Activated CD4-positive, alpha-beta T cell treated with anti-CD3 and anti-CD28 coated beads for 36 hours (primary cell): ENCODE measurements at regions of chr6 and their contacts with region 1.

Region 1: DNA sequence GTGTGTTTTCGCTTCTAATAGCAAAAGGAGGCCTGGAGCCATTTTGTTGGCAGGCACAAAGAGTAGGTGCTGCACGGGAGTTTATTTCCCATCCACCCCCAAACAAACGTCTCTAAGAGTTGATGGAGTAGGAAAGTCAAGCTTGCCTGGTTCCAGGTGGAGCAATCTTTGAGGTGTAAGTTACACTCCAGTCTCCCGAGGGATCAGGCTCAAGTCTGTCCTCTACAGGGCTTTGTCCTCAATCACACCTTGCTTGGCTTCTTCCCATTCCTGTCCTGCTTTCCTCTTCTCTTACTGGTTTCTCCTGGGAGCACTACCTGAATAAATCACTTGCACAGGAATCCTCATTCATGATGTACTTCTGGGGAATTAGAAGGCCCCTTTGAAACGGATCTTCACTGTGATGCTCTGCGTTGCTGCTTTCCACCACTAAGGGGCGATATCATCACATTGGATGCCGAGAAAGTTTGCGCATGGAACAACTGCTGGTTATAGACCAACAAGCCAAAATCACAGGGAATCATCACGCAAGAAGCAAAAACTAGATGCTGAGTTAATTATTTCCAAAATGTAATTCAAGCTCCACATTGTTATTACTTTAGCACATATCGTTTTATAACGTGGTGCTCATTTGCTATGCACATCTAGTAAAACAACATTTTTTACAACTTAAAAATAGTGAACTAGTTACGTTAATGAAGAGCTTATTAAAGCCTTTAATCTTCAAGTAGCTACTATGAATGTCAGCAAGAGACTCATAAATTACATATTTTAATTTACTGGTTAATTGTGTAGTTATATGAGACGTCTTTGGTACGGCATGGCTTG is 156.8 kb downstream of the DNAH8 start:
- DNase-seq: peak; percentile 77
- ATAC-seq: peak; percentile 60
- H3K4me3 Mint-ChIP-seq: no peak overlapping the region
- H3K27ac Mint-ChIP-seq: no peak overlapping the region
- H3K4me1 Mint-ChIP-seq: peaks cover 33% of the 10 kb centered on the region
- H3K27me3 Mint-ChIP-seq: no peaks in the 10 kb centered on the region

Region 2: GRCh38 chr6:38933432-38933831 is 61.5 kb after region 1 on chr6:
- CTCF ChIA-PET with region 1: interaction called, 6 read pairs
- POLR2A ChIA-PET with region 1: no interaction called
- intact Hi-C with region 1: loop called (anchors 1 to 5 kb)
- DNase-seq: no peak
- ATAC-seq: peak; percentile 44
- H3K4me3 Mint-ChIP-seq: no peak overlapping the region
- H3K27ac Mint-ChIP-seq: no peak overlapping the region
- H3K4me1 Mint-ChIP-seq: no peaks in the 10 kb centered on the region
- H3K27me3 Mint-ChIP-seq: peaks cover 2% of the 10 kb centered on the region

Region 3: GRCh38 chr6:38973178-38974054 is 101.5 kb after region 1 on chr6:
- CTCF ChIA-PET with region 1: interaction called, 13 read pairs
- POLR2A ChIA-PET with region 1: no interaction called
- intact Hi-C with region 1: loop called in 1 of 2 experiments (anchors 2 kb)
- DNase-seq: peak; percentile 51
- ATAC-seq: peak; percentile 99
- H3K4me3 Mint-ChIP-seq: no peak overlapping the region
- H3K27ac Mint-ChIP-seq: no peak overlapping the region
- H3K4me1 Mint-ChIP-seq: peaks cover 3% of the 10 kb centered on the region
- H3K27me3 Mint-ChIP-seq: peaks cover 19% of the 10 kb centered on the region

Region 4: DNA sequence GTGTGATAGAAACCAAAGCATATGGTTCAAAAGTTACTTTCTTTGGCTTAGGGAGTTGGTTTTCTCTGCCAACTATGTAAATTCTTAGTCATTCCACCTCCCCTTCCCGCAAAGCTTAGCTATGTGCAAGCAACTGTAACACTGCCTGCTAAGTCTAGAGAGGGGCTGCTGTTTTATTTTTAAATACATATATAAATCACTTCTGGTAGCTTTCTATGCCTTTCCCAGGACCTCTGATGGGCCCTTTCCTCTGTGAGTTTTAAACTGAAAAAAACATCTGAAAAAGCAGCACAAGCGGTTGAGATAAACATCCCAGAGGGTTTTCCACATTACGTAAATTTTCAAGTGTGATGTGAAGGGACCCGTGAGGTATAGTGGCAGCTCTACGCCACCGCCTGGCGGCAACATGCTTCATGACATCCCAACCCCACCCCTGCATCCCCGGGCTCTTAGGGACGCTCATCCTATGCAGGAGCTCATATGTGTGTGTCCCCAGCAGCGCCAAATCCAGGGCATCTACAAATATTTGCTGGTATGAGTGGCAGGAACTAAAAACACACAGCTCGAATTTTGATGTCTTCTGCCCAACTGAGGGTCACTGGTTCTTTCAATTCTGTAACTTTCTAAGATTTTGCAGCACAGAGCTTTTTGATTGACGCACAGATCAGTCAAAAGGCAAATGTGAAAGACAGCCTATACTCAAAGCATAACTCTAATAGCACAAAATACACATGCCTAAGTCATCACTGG is 230.3 kb after region 1 on chr6:
- CTCF ChIA-PET with region 1: interaction called, 3 read pairs
- POLR2A ChIA-PET with region 1: no interaction called
- intact Hi-C with region 1: loop called in 1 of 2 experiments (anchors 2 kb)
- DNase-seq: peak; percentile 58
- ATAC-seq: peak; percentile 60
- H3K4me3 Mint-ChIP-seq: no peak overlapping the region
- H3K27ac Mint-ChIP-seq: no peak overlapping the region
- H3K4me1 Mint-ChIP-seq: peaks cover 33% of the 10 kb centered on the region
- H3K27me3 Mint-ChIP-seq: no peaks in the 10 kb centered on the region

Region 5: DNA sequence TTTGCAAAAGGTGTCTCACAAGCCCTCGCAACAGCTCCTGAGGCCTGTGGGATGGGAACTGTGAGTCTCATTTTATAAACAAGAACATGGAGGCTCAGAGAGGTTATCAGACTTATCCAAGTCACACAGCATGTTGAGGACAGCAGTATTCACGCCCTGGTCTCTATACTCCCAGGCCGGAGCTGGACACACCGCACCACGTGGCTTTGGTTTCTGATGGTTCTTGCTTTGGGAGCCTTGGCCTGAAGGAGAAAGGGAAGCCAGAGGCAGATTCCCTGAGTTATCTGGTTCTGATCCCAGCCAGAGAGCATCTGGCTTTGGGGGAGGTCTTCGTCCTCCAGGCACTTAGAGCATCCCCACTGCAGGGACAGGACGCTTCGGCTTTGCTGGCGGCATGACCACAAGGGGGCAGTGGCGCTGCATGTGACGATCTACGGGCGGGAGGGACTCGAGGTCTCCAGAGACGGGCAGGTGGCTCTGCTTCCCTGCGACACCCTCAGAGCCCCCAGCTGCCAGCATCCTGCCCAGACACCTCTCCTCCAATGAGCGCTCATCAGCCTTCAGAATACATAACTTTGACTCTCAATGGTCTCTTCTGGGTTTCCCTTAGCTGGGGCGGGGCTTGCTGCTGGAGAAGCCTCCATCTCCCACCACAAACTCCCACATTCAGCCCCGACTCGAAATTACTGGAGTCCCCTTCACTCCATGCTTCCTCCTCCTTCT is 294.4 kb after region 1 on chr6:
- CTCF ChIA-PET with region 1: interaction called, 9 read pairs
- POLR2A ChIA-PET with region 1: no interaction called
- intact Hi-C with region 1: loop called (anchors 2 to 5 kb)
- DNase-seq: peak; percentile 93
- ATAC-seq: peak; percentile 97
- H3K4me3 Mint-ChIP-seq: no peak overlapping the region
- H3K27ac Mint-ChIP-seq: no peak overlapping the region
- H3K4me1 Mint-ChIP-seq: peaks cover 5% of the 10 kb centered on the region
- H3K27me3 Mint-ChIP-seq: peaks cover 2% of the 10 kb centered on the region

Region 6: GRCh38 chr6:39309942-39310531 is 438.1 kb after region 1 on chr6:
- CTCF ChIA-PET with region 1: interaction called, 22 read pairs
- POLR2A ChIA-PET with region 1: no interaction called
- intact Hi-C with region 1: loop called in 1 of 2 experiments (anchors 1 kb)
- DNase-seq: peak; percentile 81
- ATAC-seq: peak; percentile 79
- H3K4me3 Mint-ChIP-seq: no peak overlapping the region
- H3K27ac Mint-ChIP-seq: no peak overlapping the region
- H3K4me1 Mint-ChIP-seq: peaks cover 4% of the 10 kb centered on the region
- H3K27me3 Mint-ChIP-seq: peaks cover 25% of the 10 kb centered on the region